ENCODE measurements at regions of chr6 and their contacts with region 1.

Region 1: GRCh38 chr6:36885461-36886401 is at the start of gene C6orf89:
- DNase-seq: peak; percentile 97 to 98
- H3K4me3 ChIP-seq: peak within 1 kb of the TSS; percentile 68 to 82
- H3K27ac ChIP-seq: peak within 1 kb of the TSS; percentile 96
- H3K4me1 ChIP-seq: peaks cover 25% of the 10 kb centered on the region
- H3K27me3 ChIP-seq: no peaks in the 10 kb centered on the region
- CTCF ChIP-seq: peak; percentile 90 to 97 (median 96)
- POLR2A ChIP-seq: peak in 1 of 2 donors; percentile 63
- total RNA-seq, gene C6orf89: 36.8 TPM

Region 2: GRCh38 chr6:36985808-36986703 is 100.3 kb after region 1 on chr6 and contains the start of gene MTCH1:
- intact Hi-C with region 1: loop called (anchors 10 kb)
- DNase-seq: no peak
- H3K4me3 ChIP-seq: peak within 1 kb of the TSS; percentile 87 to 98
- H3K27ac ChIP-seq: peak within 1 kb of the TSS; percentile 96
- H3K4me1 ChIP-seq: peaks cover 60% of the 10 kb centered on the region
- H3K27me3 ChIP-seq: no peaks in the 10 kb centered on the region
- CTCF ChIP-seq: no peak
- POLR2A ChIP-seq: peak; percentile 64 to 97
- total RNA-seq, gene MTCH1: 233 TPM

Region 3: GRCh38 chr6:37018198-37019064 is 132.7 kb after region 1 on chr6:
- intact Hi-C with region 1: loop called (anchors 2 kb)
- DNase-seq: no peak
- H3K4me3 ChIP-seq: no peak overlapping the region
- H3K27ac ChIP-seq: peak overlapping the region; percentile 52
- H3K4me1 ChIP-seq: peaks cover 27% of the 10 kb centered on the region
- H3K27me3 ChIP-seq: no peaks in the 10 kb centered on the region
- CTCF ChIP-seq: peak; percentile 86 to 97 (median 94)
- POLR2A ChIP-seq: no peak